PC-3 (cell line): ENCODE measurements at regions of chr6 and their contacts with region 1.

Region 1: DNA sequence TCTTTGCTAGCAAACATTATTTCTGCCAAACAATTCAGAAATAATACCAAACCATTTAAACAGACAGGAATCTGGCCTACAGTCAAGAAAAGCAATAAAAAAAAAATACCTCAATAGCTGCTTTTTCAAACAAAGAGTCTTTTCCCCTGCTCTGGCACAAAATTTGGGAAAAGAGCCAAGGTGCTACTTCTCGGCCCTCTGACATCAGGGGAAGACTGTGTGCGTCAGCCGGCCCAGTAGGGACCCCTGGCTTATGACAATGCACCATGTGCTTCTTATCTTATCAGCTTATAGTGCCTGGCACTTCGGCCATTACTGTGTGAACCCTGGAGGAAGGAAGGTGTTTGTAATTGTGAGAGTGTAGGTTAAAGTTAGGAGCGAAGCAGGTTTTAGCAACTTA is 89.4 kb downstream of the PDE10A start:
- DNase-seq: peak; percentile 67
- ATAC-seq: no peak
- H3K4me3 ChIP-seq: 0 out of 2 replicates have a peak overlapping the region, but pooled peaks have one; percentile 34
- H3K27ac ChIP-seq: peak overlapping the region; percentile 98
- H3K4me1 ChIP-seq: peaks cover 25% of the 10 kb centered on the region
- H3K27me3 ChIP-seq: no peaks in the 10 kb centered on the region
- CTCF ChIP-seq: no peak

Region 2: GRCh38 chr6:165468836-165469235 is 104.8 kb before region 1 on chr6:
- CTCF ChIA-PET with region 1: no interaction called
- POLR2A ChIA-PET with region 1: no interaction called
- intact Hi-C with region 1: loop called (anchors 2 kb)
- DNase-seq: peak; percentile 43
- ATAC-seq: peak; percentile 33
- H3K4me3 ChIP-seq: peak overlapping the region; percentile 45; the same call in 1 of the 2 replicates
- H3K27ac ChIP-seq: peak overlapping the region; percentile 94
- H3K4me1 ChIP-seq: peaks cover 12% of the 10 kb centered on the region
- H3K27me3 ChIP-seq: no peaks in the 10 kb centered on the region
- CTCF ChIP-seq: no peak

Region 3: DNA sequence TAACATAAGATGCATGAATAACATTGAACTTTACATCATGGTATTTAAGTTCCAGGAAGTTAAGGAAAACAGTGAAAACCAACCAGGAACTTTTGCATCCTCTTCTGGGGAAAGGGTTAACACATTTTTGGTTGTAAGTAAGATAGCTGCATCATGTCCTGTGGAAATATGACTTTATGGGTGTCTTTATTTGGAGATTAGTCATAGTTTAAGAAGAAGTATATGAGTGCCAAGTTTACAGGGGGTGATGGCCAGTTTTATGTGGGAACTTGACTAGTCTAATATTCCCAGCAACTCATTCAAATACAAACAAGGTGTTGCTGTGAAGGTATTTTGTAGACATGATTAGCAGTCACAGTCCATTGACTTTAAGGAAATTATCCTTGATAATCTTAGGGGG is 11.4 kb after region 1 on chr6:
- CTCF ChIA-PET with region 1: no interaction called
- POLR2A ChIA-PET with region 1: interaction called, 3 read pairs
- intact Hi-C with region 1: loop called (anchors 1 kb)
- DNase-seq: peak; percentile 77
- ATAC-seq: peak; percentile 67
- H3K4me3 ChIP-seq: no peak overlapping the region
- H3K27ac ChIP-seq: peak overlapping the region; percentile 100
- H3K4me1 ChIP-seq: peaks cover 15% of the 10 kb centered on the region
- H3K27me3 ChIP-seq: no peaks in the 10 kb centered on the region
- CTCF ChIP-seq: no peak

Region 4: DNA sequence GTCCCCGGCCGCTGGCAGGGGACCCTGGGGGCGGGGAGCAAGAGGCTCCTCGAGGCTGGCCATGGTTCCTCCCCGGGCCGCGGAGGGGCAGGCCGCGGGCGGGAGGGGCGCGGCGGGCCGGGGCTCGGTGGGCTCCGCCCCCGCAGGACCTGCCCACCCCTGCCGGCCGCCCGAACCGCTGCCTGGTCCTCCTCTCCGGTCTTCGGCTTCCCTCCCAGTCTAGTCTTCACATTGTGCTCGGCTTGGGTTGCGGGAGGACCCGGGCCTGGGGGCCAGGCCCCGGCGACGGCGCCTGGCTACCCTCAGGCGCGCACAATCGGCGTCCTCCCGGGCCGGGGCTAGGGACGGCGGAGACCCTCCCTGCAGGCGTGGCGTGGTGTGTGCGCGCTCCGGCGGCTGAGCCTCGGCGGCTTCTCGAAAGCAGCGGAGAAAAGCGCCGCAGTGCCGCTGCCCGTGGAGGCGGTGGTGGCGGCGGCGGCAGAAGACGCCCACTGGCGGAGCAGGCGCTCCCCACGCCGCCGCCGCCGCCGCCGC is 89.1 kb after region 1 on chr6 and contains the start of gene PDE10A:
- CTCF ChIA-PET with region 1: no interaction called
- POLR2A ChIA-PET with region 1: no interaction called
- intact Hi-C with region 1: loop called (anchors 5 kb)
- DNase-seq: no peak
- ATAC-seq: peak; percentile 49
- H3K4me3 ChIP-seq: peak within 1 kb of the TSS; percentile 58
- H3K27ac ChIP-seq: no peak within 1 kb of the TSS
- H3K4me1 ChIP-seq: peaks cover 4% of the 10 kb centered on the region; the same call in 1 of the 2 replicates
- H3K27me3 ChIP-seq: peaks cover 63% of the 10 kb centered on the region
- CTCF ChIP-seq: no peak
- total RNA-seq, gene PDE10A: 0.92 and 2.1 TPM in 2 replicates